ENCODE measurements at regions of chr4 and their contacts with region 1.

Region 1: GRCh38 chr4:119300101-119300978 is 21.6 kb downstream of the FABP2 start:
- DNase-seq: peak; percentile 75 to 94 (median 82)
- ATAC-seq: peak; percentile 99
- H3K4me3 ChIP-seq: peak overlapping the region; percentile 58
- H3K27ac ChIP-seq: peak overlapping the region; percentile 80
- H3K4me1 ChIP-seq: peaks cover 5 to 11% of the 10 kb centered on the region in 2 experiments; a peak in 3 of 5 replicates
- H3K27me3 ChIP-seq: no peaks in the 10 kb centered on the region
- CTCF ChIP-seq: peak in 1 of 3 experiments; percentile 11; a peak in 1 of 6 replicates
- EP300 ChIP-seq: no peak
- POLR2A ChIP-seq: peak; percentile 86
- RAD21 ChIP-seq: no peak

Region 2: DNA sequence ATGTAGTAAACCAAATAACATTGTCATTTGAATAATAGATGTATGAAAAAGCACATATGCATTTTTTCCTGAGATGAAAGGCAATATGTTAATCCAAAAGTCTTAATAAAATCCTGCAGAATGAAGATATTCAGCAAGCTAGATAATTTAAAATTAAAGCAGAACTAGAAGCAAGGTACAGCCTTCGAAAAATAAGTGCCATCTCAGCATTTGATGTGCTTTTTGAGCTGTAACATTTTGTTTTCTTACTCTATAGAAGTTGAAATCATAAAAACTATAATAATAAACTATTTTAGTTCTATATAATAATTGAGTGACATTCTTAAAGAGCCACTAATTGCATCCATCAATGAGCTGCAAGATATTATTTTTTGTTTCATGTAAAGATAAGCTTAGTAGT is 1804.5 kb before region 1 on chr4:
- CTCF ChIA-PET with region 1: no interaction called
- POLR2A ChIA-PET with region 1: no interaction called
- in situ Hi-C with region 1: no loop called
- intact Hi-C with region 1: no loop called
- DNase-seq: no peak
- ATAC-seq: no peak
- H3K4me3 ChIP-seq: no peak overlapping the region
- H3K27ac ChIP-seq: no peak overlapping the region
- H3K4me1 ChIP-seq: no peaks in the 10 kb centered on the region
- H3K27me3 ChIP-seq: no peaks in the 10 kb centered on the region
- CTCF ChIP-seq: no peak
- EP300 ChIP-seq: no peak
- POLR2A ChIP-seq: no peak
- RAD21 ChIP-seq: no peak

Region 3: GRCh38 chr4:118898684-118899138 is 401.6 kb before region 1 on chr4:
- CTCF ChIA-PET with region 1: no interaction called
- POLR2A ChIA-PET with region 1: no interaction called
- in situ Hi-C with region 1: no loop called
- intact Hi-C with region 1: loop called (anchors 10 kb)
- DNase-seq: no peak
- ATAC-seq: no peak
- H3K4me3 ChIP-seq: no peak overlapping the region
- H3K27ac ChIP-seq: no peak overlapping the region
- H3K4me1 ChIP-seq: no peaks in the 10 kb centered on the region
- H3K27me3 ChIP-seq: peaks cover 2 to 5% of the 10 kb centered on the region in 2 experiments; a peak in 2 of 5 replicates
- CTCF ChIP-seq: no peak
- EP300 ChIP-seq: no peak
- POLR2A ChIP-seq: no peak
- RAD21 ChIP-seq: no peak

Region 4: GRCh38 chr4:119041951-119042560 is 258.3 kb before region 1 on chr4:
- CTCF ChIA-PET with region 1: no interaction called
- POLR2A ChIA-PET with region 1: no interaction called
- in situ Hi-C with region 1: loop called (anchors 10 kb)
- intact Hi-C with region 1: no loop called
- DNase-seq: peak; percentile 33 to 71 (median 50)
- ATAC-seq: peak; percentile 97
- H3K4me3 ChIP-seq: no peak overlapping the region
- H3K27ac ChIP-seq: no peak overlapping the region
- H3K4me1 ChIP-seq: no peaks in the 10 kb centered on the region
- H3K27me3 ChIP-seq: no peaks in the 10 kb centered on the region
- CTCF ChIP-seq: peak; percentile 65 to 72 (median 69)
- EP300 ChIP-seq: no peak
- POLR2A ChIP-seq: no peak
- RAD21 ChIP-seq: peak; percentile 77 to 84

Region 5: DNA sequence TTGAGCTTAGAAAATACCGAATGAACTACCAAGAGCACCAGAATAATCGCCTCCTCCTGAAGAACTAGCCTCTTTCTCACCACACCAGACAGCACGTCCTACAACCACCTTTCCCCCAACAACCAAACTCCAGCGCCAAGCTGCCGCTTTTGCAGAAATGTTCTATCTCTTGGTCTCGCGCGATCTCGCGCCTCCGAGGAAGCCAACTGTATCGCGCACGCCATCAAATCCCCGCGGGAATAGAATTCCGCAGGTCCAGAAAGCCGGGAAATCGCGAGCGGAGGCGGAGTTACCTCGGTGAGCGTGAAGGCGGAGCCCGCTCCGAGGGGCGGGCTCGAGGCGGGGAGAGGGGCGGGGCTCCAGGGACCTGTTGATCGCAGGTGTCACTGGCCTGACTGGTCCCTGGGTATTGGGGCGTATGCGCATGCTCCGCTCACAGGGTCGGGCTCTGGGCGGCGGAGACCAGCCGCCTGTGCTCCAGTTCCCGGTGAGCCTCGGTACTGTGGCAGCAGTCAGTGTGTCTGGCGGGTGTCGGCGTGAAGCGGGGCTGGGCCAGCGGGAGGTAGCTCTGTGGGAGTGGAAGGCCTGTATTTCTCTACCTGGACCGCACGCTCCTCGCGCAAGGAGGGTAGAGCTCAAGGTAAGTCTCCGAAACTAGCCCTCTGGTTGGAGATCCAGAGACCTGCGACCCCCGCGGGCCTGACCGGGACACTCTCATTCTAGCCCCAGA is 87.9 kb before region 1 on chr4 and contains the start of gene USP53:
- CTCF ChIA-PET with region 1: no interaction called
- POLR2A ChIA-PET with region 1: interaction called, 13 read pairs
- in situ Hi-C with region 1: no loop called
- intact Hi-C with region 1: no loop called
- DNase-seq: peak; percentile 97 to 98 (median 97)
- ATAC-seq: peak; percentile 95
- H3K4me3 ChIP-seq: peak within 1 kb of the TSS; percentile 72
- H3K27ac ChIP-seq: peak within 1 kb of the TSS; percentile 87
- H3K4me1 ChIP-seq: peaks cover 4 to 8% of the 10 kb centered on the region in 2 experiments; a peak in 4 of 5 replicates
- H3K27me3 ChIP-seq: no peaks in the 10 kb centered on the region
- CTCF ChIP-seq: no peak
- EP300 ChIP-seq: no peak
- POLR2A ChIP-seq: peak; percentile 97
- RAD21 ChIP-seq: no peak; a peak in 1 of 4 replicates
- polyA plus RNA-seq, gene USP53: 2.9 TPM

Measured in K562 (cell line).